Natural killer cell (primary cell): ENCODE measurements at regions of chr4 and their contacts with region 1.

Region 1: GRCh38 chr4:68326141-68326540 is 23.7 kb downstream of the YTHDC1 start:
- DNase-seq: no peak
- ATAC-seq: no peak
- H3K4me3 ChIP-seq: no peak overlapping the region
- H3K4me3 Mint-ChIP-seq: no peak overlapping the region
- H3K27ac ChIP-seq: no peak overlapping the region
- H3K27ac Mint-ChIP-seq: peak overlapping the region in 1 of 2 donors; percentile 73
- H3K4me1 ChIP-seq: no peaks in the 10 kb centered on the region
- H3K4me1 Mint-ChIP-seq: peaks cover 11 to 26% of the 10 kb centered on the region in 2 donors
- H3K27me3 ChIP-seq: no peaks in the 10 kb centered on the region
- H3K27me3 Mint-ChIP-seq: no peaks in the 10 kb centered on the region
- CTCF ChIP-seq: no peak

Region 2: GRCh38 chr4:68283714-68284113 is 42.4 kb before region 1 on chr4:
- intact Hi-C with region 1: loop called (anchors 2 kb)
- DNase-seq: no peak
- ATAC-seq: no peak
- H3K4me3 ChIP-seq: no peak overlapping the region
- H3K4me3 Mint-ChIP-seq: no peak overlapping the region
- H3K27ac ChIP-seq: no peak overlapping the region
- H3K27ac Mint-ChIP-seq: no peak overlapping the region
- H3K4me1 ChIP-seq: no peaks in the 10 kb centered on the region
- H3K4me1 Mint-ChIP-seq: no peaks in the 10 kb centered on the region
- H3K27me3 ChIP-seq: peaks cover 5% of the 10 kb centered on the region
- H3K27me3 Mint-ChIP-seq: peaks cover 0 to 21% of the 10 kb centered on the region in 2 donors
- CTCF ChIP-seq: no peak

Region 3: GRCh38 chr4:68466185-68466584 is 140.0 kb after region 1 on chr4:
- intact Hi-C with region 1: no loop called
- DNase-seq: no peak
- ATAC-seq: no peak
- H3K4me3 ChIP-seq: no peak overlapping the region
- H3K4me3 Mint-ChIP-seq: no peak overlapping the region
- H3K27ac ChIP-seq: no peak overlapping the region
- H3K27ac Mint-ChIP-seq: no peak overlapping the region
- H3K4me1 ChIP-seq: no peaks in the 10 kb centered on the region
- H3K4me1 Mint-ChIP-seq: no peaks in the 10 kb centered on the region
- H3K27me3 ChIP-seq: no peaks in the 10 kb centered on the region
- H3K27me3 Mint-ChIP-seq: no peaks in the 10 kb centered on the region
- CTCF ChIP-seq: no peak